Panc1 (cell line): ENCODE measurements at regions of chr6 and their contacts with region 1.

Region 1: GRCh38 chr6:111709615-111710398 is 104.1 kb upstream of the TRAF3IP2 start:
- DNase-seq: peak; percentile 61
- ATAC-seq: peak; percentile 93
- H3K4me3 ChIP-seq: peak overlapping the region; percentile 20 to 39
- H3K27ac ChIP-seq: no peak overlapping the region
- H3K4me1 ChIP-seq: 0 out of 2 replicates have a peak, but pooled peaks cover 3% of the 10 kb centered on the region
- H3K27me3 ChIP-seq: peaks cover 5% of the 10 kb centered on the region
- CTCF ChIP-seq: peak; percentile 81

Region 2: GRCh38 chr6:111668410-111668809 is 41.4 kb before region 1 on chr6:
- CTCF ChIA-PET with region 1: no interaction called
- POLR2A ChIA-PET with region 1: no interaction called
- in situ Hi-C with region 1: no loop called
- intact Hi-C with region 1: no loop called
- DNase-seq: no peak
- ATAC-seq: no peak
- H3K4me3 ChIP-seq: no peak overlapping the region
- H3K27ac ChIP-seq: no peak overlapping the region
- H3K4me1 ChIP-seq: no peaks in the 10 kb centered on the region
- H3K27me3 ChIP-seq: peaks cover 4% of the 10 kb centered on the region
- CTCF ChIP-seq: no peak

Region 3: GRCh38 chr6:111683749-111684267 is 26.0 kb before region 1 on chr6:
- CTCF ChIA-PET with region 1: no interaction called
- POLR2A ChIA-PET with region 1: no interaction called
- in situ Hi-C with region 1: no loop called
- intact Hi-C with region 1: no loop called
- DNase-seq: no peak
- ATAC-seq: no peak
- H3K4me3 ChIP-seq: no peak overlapping the region
- H3K27ac ChIP-seq: no peak overlapping the region
- H3K4me1 ChIP-seq: peaks cover 5% of the 10 kb centered on the region; the same call in 1 of the 2 replicates
- H3K27me3 ChIP-seq: peaks cover 4% of the 10 kb centered on the region
- CTCF ChIP-seq: no peak

Region 4: DNA sequence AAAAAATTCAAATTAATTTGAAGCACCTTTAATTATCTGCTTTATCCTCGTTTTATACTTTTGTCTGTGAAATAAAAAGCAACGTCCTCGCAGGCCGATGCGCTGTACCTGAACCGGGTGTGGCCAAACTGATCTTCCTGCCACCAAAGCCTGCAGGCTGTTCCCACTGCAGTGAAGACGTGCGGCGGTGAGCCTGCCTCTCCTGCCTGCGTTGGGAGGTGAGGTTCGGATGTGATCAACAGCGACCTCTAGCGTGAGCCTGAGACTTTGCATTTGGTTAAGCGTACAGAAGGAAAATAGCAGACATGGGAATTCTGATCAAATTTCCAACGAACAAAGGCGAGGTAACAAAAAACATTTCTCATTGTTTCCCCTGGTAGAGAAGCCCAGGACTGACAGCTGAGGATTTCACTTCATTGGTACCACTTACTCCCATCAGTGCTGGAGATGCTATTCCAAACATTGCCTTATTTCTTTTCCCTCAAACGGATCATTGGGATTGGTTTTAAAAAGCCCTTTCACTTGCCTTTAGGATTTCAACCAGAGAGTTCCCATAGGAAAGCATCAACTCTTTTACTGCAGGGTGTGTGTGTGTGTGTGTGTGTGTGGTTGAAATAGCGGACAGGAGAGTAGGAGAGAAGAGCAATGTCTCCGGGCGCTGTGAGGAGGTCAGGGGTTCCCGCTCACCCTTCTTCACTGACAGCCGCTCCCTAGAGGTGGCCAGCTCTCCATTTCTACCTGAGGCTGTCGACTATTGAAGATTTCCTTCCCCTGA is 287.5 kb after region 1 on chr6:
- CTCF ChIA-PET with region 1: no interaction called
- POLR2A ChIA-PET with region 1: no interaction called
- in situ Hi-C with region 1: no loop called
- intact Hi-C with region 1: loop called (anchors 1 kb)
- DNase-seq: peak; percentile 67
- ATAC-seq: peak; percentile 95
- H3K4me3 ChIP-seq: no peak overlapping the region
- H3K27ac ChIP-seq: no peak overlapping the region
- H3K4me1 ChIP-seq: no peaks in the 10 kb centered on the region
- H3K27me3 ChIP-seq: peaks cover 24% of the 10 kb centered on the region
- CTCF ChIP-seq: peak; percentile 98

Region 5: GRCh38 chr6:112029045-112029822 is 319.4 kb after region 1 on chr6:
- CTCF ChIA-PET with region 1: no interaction called
- POLR2A ChIA-PET with region 1: no interaction called
- in situ Hi-C with region 1: no loop called
- intact Hi-C with region 1: loop called (anchors 1 kb)
- DNase-seq: peak; percentile 46
- ATAC-seq: peak; percentile 81
- H3K4me3 ChIP-seq: no peak overlapping the region
- H3K27ac ChIP-seq: no peak overlapping the region
- H3K4me1 ChIP-seq: no peaks in the 10 kb centered on the region
- H3K27me3 ChIP-seq: peaks cover 16% of the 10 kb centered on the region
- CTCF ChIP-seq: peak; percentile 97

Region 6: DNA sequence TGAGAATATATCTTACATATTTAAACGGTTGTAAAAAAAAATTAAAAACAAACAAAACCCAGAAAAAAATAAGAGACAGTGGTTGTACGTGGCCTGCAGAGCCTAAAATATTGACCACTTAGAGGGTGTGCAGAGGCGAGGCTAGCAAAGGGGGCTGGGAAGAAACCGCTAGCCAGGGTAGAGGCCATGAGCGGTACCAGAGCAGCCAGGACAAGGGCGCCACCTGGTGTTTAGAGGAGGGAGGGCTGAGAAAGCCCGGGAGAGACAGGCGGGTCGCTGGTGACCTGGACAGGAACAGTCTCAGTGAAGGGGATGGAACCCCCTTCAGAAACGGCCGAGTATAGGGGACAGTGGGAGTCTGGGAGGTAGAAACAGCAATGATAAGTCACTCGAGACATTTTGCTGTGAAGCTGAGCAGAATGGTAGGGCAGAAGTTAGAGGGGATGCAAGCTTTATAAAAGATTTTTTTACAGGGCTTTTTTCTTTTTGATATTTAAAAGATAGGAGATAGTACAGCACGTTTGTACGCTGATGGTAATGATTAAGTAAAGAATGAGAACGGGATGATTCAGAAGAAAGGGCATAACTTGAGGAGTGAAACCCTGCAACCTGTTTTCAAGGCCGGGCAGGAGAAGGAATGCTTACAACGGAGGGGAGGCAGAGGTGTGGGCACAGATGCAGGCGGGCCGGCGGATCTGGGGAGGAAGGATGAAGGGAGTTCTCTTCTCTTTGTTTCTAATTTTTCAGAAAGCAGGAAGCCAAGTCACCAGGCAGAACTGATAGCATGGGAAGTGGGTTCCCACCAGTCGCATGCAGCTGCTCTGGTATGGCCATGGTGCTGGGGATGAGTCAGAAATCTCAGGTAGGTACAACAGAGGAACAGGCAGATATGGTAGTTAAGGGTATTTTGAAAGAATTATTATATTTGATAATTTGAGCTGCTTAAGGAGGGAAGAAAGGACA is 453.8 kb after region 1 on chr6:
- CTCF ChIA-PET with region 1: interaction called, 4 read pairs
- POLR2A ChIA-PET with region 1: no interaction called
- in situ Hi-C with region 1: no loop called
- intact Hi-C with region 1: loop called (anchors 2 kb)
- DNase-seq: peak; percentile 38
- ATAC-seq: peak; percentile 99
- H3K4me3 ChIP-seq: no peak overlapping the region
- H3K27ac ChIP-seq: no peak overlapping the region
- H3K4me1 ChIP-seq: no peaks in the 10 kb centered on the region
- H3K27me3 ChIP-seq: peaks cover 4% of the 10 kb centered on the region; the same call in 1 of the 2 replicates
- CTCF ChIP-seq: peak; percentile 100